ENCODE measurements at regions of chr1 and their contacts with region 1.

Region 1: DNA sequence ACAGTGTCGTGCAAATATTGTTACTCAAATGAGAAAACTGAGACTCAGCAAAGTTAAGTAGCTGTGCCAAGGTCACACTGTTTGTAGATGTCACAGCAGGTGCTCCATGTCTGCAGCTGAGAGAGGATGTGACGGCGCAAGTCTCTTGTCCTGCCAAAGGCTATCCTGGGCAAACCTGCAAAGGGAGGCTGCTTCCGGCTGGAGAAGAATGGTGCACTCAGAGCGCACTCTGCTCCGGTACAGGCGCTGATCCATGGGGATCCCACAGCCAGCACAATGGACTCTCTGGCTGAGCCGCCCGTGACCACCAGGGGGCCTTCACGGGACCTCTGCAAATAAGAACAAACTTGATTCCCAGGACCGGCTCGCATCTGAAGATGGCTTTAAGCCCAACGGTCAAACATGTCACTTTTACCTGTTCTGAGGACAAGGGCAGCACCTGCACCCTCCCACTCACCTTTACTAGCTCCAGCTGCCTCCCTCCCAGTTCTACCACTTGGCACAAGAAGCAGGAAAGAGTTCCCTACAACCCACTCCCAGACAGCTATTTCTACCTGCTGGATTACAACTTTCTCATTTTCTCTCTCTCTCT is 21.9 kb downstream of the RD3 start:
- DNase-seq: peak; percentile 92
- ATAC-seq: peak; percentile 100
- H3K4me3 Mint-ChIP-seq: no peak overlapping the region
- H3K27ac Mint-ChIP-seq: no peak overlapping the region
- H3K4me1 Mint-ChIP-seq: peaks cover 10% of the 10 kb centered on the region
- H3K27me3 Mint-ChIP-seq: no peaks in the 10 kb centered on the region
- CTCF ChIP-seq: peak; percentile 81

Region 2: DNA sequence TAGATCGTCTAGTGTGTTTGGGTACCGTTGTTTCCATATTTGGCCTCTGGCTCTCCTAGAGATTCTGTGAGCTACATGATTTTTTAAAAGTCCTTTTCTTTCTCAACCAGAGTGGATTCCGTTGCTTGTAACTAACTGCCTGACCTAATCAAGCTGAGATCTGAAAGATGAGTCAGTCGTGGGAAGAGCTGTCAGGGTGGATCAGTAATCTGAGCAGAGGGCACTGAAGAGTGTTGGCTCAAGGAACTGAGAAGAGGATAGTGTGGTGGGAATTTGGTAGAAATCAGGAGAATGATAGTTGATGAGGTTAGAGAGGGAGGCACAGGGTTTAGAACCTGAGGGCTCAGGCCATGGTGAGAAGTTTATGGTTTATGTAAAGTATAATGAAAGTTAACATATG is 91.2 kb before region 1 on chr1:
- CTCF ChIA-PET with region 1: no interaction called
- POLR2A ChIA-PET with region 1: no interaction called
- DNase-seq: no peak
- ATAC-seq: no peak
- H3K4me3 Mint-ChIP-seq: no peak overlapping the region
- H3K27ac Mint-ChIP-seq: peak overlapping the region; percentile 7; the same call in 1 of the 2 replicates
- H3K4me1 Mint-ChIP-seq: peaks cover 63% of the 10 kb centered on the region
- H3K27me3 Mint-ChIP-seq: no peaks in the 10 kb centered on the region
- CTCF ChIP-seq: no peak

Region 3: GRCh38 chr1:211514030-211514754 is 44.2 kb after region 1 on chr1:
- CTCF ChIA-PET with region 1: interaction called, 12 read pairs
- POLR2A ChIA-PET with region 1: no interaction called
- DNase-seq: peak; percentile 91
- ATAC-seq: peak; percentile 87
- H3K4me3 Mint-ChIP-seq: peak overlapping the region; percentile 43
- H3K27ac Mint-ChIP-seq: no peak overlapping the region
- H3K4me1 Mint-ChIP-seq: peaks cover 14% of the 10 kb centered on the region
- H3K27me3 Mint-ChIP-seq: peaks cover 25% of the 10 kb centered on the region
- CTCF ChIP-seq: peak; percentile 60

Measured in WTC11 (cell line).